CD8-positive, alpha-beta T cell (primary cell): ENCODE measurements at regions of chr11 and their contacts with region 1.

Region 1: DNA sequence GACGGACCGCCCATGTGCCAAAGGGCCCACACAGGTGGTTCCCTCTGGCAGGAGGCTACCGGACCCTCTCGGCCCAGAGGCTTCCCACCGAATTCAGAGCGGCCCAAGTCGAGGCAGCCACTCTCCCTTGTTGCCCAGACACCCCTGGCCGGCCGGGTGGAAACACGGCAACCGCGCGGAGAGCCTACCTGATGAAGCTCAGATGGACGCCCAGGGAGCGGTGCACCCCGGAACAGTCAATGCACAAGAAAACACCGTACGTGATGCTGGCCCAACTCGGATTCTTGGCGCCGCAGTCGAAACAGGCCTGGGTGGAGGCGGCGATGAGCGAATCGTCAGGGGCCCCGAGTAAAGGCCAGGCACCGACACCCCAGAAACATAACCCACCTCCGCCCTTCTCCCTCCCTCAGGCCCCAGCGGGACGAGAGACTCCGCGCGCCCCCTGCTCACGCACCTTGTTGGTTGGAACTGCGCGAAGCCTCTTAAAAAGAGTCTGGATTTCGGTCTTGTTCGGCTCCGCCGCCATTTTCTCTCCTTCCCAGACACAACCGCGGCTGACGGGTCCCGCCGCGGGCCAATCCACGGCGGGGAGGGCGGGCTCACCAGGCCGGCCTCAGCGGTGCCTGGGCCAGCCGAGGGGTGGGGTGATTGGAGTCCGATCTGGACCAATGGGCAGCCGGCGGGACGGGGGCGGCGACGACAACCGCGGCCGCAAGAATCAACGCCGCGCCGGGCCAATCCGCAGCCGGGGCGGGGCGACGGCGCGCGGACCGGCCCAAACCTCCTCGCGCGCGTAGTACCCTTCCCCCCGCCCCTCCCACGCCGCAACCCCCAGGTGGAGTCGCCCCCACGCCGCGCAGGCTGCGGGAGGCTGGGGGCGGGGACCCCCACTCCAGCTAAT is at the start of gene ARFGAP2:
- DNase-seq: peak; percentile 93 to 98 (median 96)
- ATAC-seq: peak; percentile 91
- H3K4me3 ChIP-seq: peak within 1 kb of the TSS; percentile 97 to 100
- H3K4me3 Mint-ChIP-seq: peak within 1 kb of the TSS; percentile 94
- H3K27ac ChIP-seq: peak within 1 kb of the TSS; percentile 95 to 98
- H3K27ac Mint-ChIP-seq: peak within 1 kb of the TSS; percentile 98
- H3K4me1 ChIP-seq: peaks cover 28% of the 10 kb centered on the region
- H3K4me1 Mint-ChIP-seq: peaks cover 41% of the 10 kb centered on the region
- H3K27me3 ChIP-seq: no peaks in the 10 kb centered on the region
- H3K27me3 Mint-ChIP-seq: no peaks in the 10 kb centered on the region
- CTCF ChIP-seq: no peak
- total RNA-seq, gene ARFGAP2: 194 to 215 TPM

Region 2: GRCh38 chr11:46826310-46827044 is 350.1 kb before region 1 on chr11:
- CTCF ChIA-PET with region 1: no interaction called
- POLR2A ChIA-PET with region 1: no interaction called
- intact Hi-C with region 1: loop called in 1 of 2 experiments (anchors 1 kb)
- DNase-seq: peak; percentile 41 to 82 (median 75)
- ATAC-seq: peak; percentile 100
- H3K4me3 ChIP-seq: peak overlapping the region; percentile 57 to 60
- H3K4me3 Mint-ChIP-seq: peak overlapping the region; percentile 84
- H3K27ac ChIP-seq: no peak overlapping the region
- H3K27ac Mint-ChIP-seq: peak overlapping the region; percentile 32
- H3K4me1 ChIP-seq: peaks cover 16% of the 10 kb centered on the region
- H3K4me1 Mint-ChIP-seq: peaks cover 34% of the 10 kb centered on the region
- H3K27me3 ChIP-seq: no peaks in the 10 kb centered on the region
- H3K27me3 Mint-ChIP-seq: no peaks in the 10 kb centered on the region
- CTCF ChIP-seq: no peak

Region 3: DNA sequence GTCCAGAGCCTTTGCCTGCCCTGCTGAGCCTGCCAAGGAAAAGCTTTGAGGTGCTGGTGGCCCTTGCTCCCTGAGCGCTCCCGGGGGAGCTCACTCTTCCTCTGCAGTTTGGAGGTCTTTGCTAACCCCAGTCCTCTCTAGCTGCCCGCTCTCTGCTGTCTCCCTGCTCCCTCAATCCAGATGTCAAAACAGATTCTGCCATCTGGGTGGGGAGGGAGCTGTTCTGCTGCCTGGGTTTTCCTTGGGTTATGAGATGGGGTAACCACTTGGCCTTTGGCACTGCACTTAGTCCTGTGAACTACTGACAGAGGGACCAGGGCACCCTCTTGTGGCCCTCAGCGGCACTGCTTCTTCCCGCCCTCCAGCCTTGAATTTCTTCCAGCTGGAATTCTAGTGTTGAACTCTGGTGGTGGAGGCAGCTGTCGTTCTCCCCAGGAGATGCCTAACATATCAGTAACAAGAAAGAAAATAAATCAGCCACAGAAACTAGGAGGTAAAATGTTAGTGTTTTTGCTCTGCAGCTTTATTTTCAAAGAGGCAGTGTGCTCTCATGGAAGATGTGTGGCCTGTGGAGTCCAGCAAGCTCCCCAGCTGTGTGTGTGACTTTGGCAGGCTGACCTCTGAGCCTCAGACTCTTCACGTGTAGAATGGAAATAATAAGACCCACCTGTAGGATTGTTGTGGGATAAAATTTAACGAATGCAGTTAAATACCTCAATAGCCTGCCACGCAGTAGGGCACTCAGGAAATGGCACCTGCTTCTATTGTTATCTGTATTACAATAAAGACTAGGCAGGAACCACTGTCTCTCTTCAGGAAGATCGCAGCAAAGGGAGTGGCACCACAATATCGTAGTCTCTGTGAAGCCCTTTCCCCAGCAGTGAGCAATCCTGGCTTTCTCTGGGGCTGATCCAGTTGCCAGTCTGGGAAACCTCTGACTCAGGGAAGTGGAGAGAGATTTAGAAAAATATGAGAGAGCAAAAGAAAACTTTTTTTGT is 23.3 kb before region 1 on chr11:
- CTCF ChIA-PET with region 1: interaction called, 17 read pairs
- POLR2A ChIA-PET with region 1: interaction called, 4 read pairs
- intact Hi-C with region 1: no loop called
- DNase-seq: peak in 7 of 9 experiments; percentile 21 to 74 (median 58)
- ATAC-seq: peak; percentile 55
- H3K4me3 ChIP-seq: no peak overlapping the region
- H3K4me3 Mint-ChIP-seq: peak overlapping the region; percentile 67
- H3K27ac ChIP-seq: peak overlapping the region; percentile 32 to 56
- H3K27ac Mint-ChIP-seq: peak overlapping the region; percentile 84
- H3K4me1 ChIP-seq: peaks cover 45% of the 10 kb centered on the region
- H3K4me1 Mint-ChIP-seq: peaks cover 35% of the 10 kb centered on the region
- H3K27me3 ChIP-seq: no peaks in the 10 kb centered on the region
- H3K27me3 Mint-ChIP-seq: no peaks in the 10 kb centered on the region
- CTCF ChIP-seq: peak; percentile 90

Region 4: DNA sequence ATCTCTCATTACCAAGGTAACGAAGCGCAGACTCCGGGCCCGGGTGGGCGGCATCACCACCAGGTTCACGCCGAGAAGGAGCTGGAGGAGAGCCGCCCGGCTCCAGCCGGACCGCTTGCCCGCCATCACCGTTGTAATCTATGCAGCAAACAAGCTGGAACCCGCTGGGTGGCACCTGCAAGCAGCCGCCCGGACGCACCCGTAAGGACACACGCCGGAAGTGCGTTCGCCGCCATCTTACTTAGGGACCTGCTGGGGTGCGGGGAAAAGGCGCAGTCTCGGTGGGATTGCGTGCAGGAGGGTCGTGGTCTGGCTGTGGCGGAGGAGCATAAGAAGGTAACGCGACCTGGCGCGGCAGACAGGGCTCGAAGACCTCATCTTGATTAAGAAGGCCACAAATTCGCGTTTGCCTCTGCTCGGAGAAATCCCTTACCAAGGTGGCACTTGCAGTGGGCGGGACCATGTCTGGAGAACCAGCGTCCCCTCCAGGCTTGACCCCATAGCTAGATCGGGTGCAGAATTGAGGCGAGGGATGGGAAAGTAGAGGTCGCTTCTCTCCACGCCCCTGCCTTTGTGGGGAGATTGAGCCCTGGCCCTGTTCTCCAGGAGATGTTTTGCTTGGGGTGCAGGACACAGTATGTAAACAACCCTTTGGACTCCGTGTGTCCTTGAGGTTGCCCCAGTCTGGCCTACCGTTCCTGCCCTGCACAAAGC is 72.2 kb after region 1 on chr11 and contains the start of gene ACP2:
- CTCF ChIA-PET with region 1: interaction called, 5 read pairs
- POLR2A ChIA-PET with region 1: interaction called, 5 read pairs
- intact Hi-C with region 1: loop called (anchors 1 kb)
- DNase-seq: peak; percentile 70 to 93 (median 85)
- ATAC-seq: peak; percentile 97
- H3K4me3 ChIP-seq: peak within 1 kb of the TSS; percentile 81 to 90
- H3K4me3 Mint-ChIP-seq: peak within 1 kb of the TSS; percentile 100
- H3K27ac ChIP-seq: peak within 1 kb of the TSS; percentile 63 to 83
- H3K27ac Mint-ChIP-seq: peak within 1 kb of the TSS; percentile 100
- H3K4me1 ChIP-seq: peaks cover 17% of the 10 kb centered on the region
- H3K4me1 Mint-ChIP-seq: peaks cover 32% of the 10 kb centered on the region
- H3K27me3 ChIP-seq: no peaks in the 10 kb centered on the region
- H3K27me3 Mint-ChIP-seq: no peaks in the 10 kb centered on the region
- CTCF ChIP-seq: no peak
- total RNA-seq, gene ACP2: 18.3 to 22.6 TPM

Region 5: DNA sequence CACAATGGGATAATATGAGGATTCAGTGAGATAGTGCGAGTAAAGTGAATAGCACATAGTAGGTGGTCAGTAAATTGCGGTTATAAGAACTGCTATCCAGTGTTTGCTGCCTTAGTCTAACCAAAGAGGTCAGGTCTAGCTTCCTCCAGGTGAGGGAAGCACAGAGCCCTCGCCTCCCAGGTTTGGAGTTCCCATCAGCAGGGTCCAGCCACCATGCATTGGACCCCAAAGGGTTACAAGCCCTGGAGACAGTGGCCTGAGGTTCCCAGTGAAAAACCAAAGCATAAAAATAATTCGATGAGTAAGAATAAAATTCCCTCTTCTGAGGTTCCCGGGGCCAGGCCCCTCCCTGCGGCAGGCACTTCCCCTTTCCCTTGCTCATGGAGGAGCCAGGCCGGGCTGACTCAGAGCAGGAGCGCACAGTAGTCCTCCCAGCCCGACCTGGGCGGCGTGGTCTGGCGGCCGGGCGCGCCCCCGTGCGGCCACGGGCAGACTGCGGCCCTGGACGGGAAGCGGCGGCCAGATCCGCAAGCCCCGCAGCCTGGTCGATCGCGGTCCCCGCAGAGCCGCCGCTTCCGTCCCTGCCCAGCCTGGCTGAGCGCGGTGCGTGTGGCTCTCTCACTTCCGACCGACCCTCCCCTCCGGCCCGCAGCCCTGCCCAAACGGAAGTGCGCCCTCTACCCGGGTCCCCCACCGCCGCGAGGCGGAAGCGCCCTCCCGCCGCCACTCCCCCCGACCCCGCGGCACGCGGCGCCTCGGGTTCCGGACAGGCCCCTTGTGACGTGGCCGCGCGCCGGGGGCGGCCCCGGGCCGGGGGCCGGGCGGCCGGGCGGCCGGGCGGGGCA is 231.4 kb after region 1 on chr11 and contains the start of gene SLC39A13:
- CTCF ChIA-PET with region 1: interaction called, 7 read pairs
- POLR2A ChIA-PET with region 1: no interaction called
- intact Hi-C with region 1: loop called in 1 of 2 experiments (anchors 5 kb)
- DNase-seq: peak; percentile 77 to 97 (median 90)
- ATAC-seq: peak; percentile 88
- H3K4me3 ChIP-seq: peak within 1 kb of the TSS; percentile 70 to 85
- H3K4me3 Mint-ChIP-seq: peak within 1 kb of the TSS; percentile 93
- H3K27ac ChIP-seq: peak within 1 kb of the TSS; percentile 64 to 87
- H3K27ac Mint-ChIP-seq: peak within 1 kb of the TSS; percentile 96
- H3K4me1 ChIP-seq: peaks cover 18% of the 10 kb centered on the region
- H3K4me1 Mint-ChIP-seq: peaks cover 25% of the 10 kb centered on the region
- H3K27me3 ChIP-seq: no peaks in the 10 kb centered on the region
- H3K27me3 Mint-ChIP-seq: no peaks in the 10 kb centered on the region
- CTCF ChIP-seq: peak; percentile 89
- total RNA-seq, gene SLC39A13: 34.0 to 34.6 TPM

Region 6: DNA sequence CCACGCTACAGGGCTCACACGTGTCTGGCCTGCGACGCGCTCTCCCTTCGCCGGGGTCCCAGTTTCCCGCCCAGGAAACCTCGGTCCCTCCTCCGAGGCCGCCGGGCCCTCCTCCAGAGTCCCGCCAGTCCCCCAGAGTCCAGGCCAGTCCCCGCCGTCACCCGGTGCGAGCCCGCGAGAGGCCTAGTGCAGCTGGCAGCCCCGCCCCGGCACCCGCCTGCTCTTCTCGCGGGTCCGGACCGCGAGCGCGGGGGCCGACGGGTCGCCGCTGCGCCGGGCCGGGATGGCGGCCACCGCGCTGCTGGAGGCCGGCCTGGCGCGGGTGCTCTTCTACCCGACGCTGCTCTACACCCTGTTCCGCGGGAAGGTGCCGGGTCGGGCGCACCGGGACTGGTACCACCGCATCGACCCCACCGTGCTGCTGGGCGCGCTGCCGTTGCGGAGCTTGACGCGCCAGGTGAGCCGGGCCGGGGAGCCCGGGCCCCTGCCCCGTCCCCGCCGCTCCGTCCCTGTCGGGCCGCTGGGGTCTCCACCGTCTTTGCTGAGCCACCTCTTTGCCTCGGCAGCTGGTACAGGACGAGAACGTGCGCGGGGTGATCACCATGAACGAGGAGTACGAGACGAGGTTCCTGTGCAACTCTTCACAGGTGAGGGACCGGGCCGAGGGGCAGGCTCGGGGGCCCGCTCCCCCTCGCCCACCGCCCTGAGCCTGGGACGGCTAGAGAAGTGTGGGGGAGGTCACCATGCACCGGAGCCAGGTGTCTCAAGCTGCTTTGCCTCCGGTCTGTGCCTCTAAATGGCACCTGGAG is 389.0 kb after region 1 on chr11 and contains the start of gene PTPMT1:
- CTCF ChIA-PET with region 1: no interaction called
- POLR2A ChIA-PET with region 1: no interaction called
- intact Hi-C with region 1: loop called in 1 of 2 experiments (anchors 10 kb)
- DNase-seq: peak; percentile 26 to 79 (median 63)
- ATAC-seq: peak; percentile 85
- H3K4me3 ChIP-seq: peak within 1 kb of the TSS; percentile 76 to 83
- H3K4me3 Mint-ChIP-seq: peak within 1 kb of the TSS; percentile 85
- H3K27ac ChIP-seq: peak within 1 kb of the TSS; percentile 76 to 86
- H3K27ac Mint-ChIP-seq: peak within 1 kb of the TSS; percentile 84
- H3K4me1 ChIP-seq: peaks cover 13% of the 10 kb centered on the region
- H3K4me1 Mint-ChIP-seq: peaks cover 27% of the 10 kb centered on the region
- H3K27me3 ChIP-seq: no peaks in the 10 kb centered on the region
- H3K27me3 Mint-ChIP-seq: no peaks in the 10 kb centered on the region
- CTCF ChIP-seq: no peak
- total RNA-seq, gene PTPMT1: 24.4 to 24.5 TPM